Esophagus squamous epithelium (tissue), 5 donors: ENCODE measurements at regions of chr16 and their contacts with region 1.

Region 1: GRCh38 chr16:71811261-71811803 is 2.7 kb upstream of the AP1G1 start:
- DNase-seq: no peak
- H3K4me3 ChIP-seq: no peak overlapping the region
- H3K27ac ChIP-seq: no peak overlapping the region
- H3K4me1 ChIP-seq: peaks cover 0 to 31% (median 16%) of the 10 kb centered on the region in 3 donors
- H3K27me3 ChIP-seq: no peaks in the 10 kb centered on the region
- CTCF ChIP-seq: no peak
- POLR2A ChIP-seq: no peak

Region 2: DNA sequence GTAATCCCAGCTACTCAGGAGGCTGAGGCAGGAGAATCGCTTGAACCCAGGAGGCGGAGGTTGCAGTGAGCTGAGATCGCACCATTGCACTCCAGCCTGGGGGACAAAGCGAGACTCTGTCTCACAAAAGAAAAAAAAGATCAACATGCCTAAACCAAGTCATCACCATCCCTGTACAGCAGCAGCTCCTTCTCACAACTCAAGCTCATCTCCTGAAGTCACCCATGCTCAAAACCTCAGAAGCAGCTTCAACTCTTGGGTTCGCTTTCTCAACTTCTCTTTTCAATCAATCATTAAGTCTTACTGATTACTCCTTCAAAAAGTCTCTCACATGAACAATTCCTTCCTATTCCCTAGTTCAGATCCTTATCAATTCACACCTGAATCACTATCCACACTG is 118.2 kb before region 1 on chr16:
- intact Hi-C with region 1: no loop called
- DNase-seq: no peak
- H3K4me3 ChIP-seq: no peak overlapping the region
- H3K27ac ChIP-seq: no peak overlapping the region
- H3K4me1 ChIP-seq: no peaks in the 10 kb centered on the region
- H3K27me3 ChIP-seq: no peaks in the 10 kb centered on the region
- CTCF ChIP-seq: no peak
- POLR2A ChIP-seq: no peak

Region 3: GRCh38 chr16:71883849-71884638 is 72.7 kb after region 1 on chr16 and contains the start of gene ZNF821:
- intact Hi-C with region 1: loop called (anchors 10 kb)
- DNase-seq: no peak
- H3K4me3 ChIP-seq: peak within 1 kb of the TSS; percentile 90 to 99 (median 97)
- H3K27ac ChIP-seq: peak within 1 kb of the TSS; percentile 89 to 93 (median 92)
- H3K4me1 ChIP-seq: peaks cover 0 to 40% (median 5%) of the 10 kb centered on the region in 3 donors
- H3K27me3 ChIP-seq: no peaks in the 10 kb centered on the region
- CTCF ChIP-seq: peak in 3 of 6 experiments; percentile 22 to 39 (median 25)
- POLR2A ChIP-seq: peak in 1 of 4 donors; percentile 25
- total RNA-seq, gene ZNF821: 2.5 to 8.2 (median 4.0) TPM